Calu3 (cell line): ENCODE measurements at regions of chr1 and their contacts with region 1.

Region 1: GRCh38 chr1:58290685-58291372 is 255.7 kb downstream of the OMA1 start:
- DNase-seq: peak; percentile 16
- H3K4me3 Mint-ChIP-seq: no peak overlapping the region
- H3K27ac Mint-ChIP-seq: no peak overlapping the region
- H3K4me1 Mint-ChIP-seq: no peaks in the 10 kb centered on the region
- H3K27me3 Mint-ChIP-seq: no peaks in the 10 kb centered on the region
- CTCF ChIP-seq: no peak

Region 2: GRCh38 chr1:59879574-59879973 is 1588.7 kb after region 1 on chr1:
- CTCF ChIA-PET with region 1: no interaction called
- intact Hi-C with region 1: loop called (anchors 5 kb)
- DNase-seq: peak; percentile 80
- H3K4me3 Mint-ChIP-seq: no peak overlapping the region
- H3K27ac Mint-ChIP-seq: no peak overlapping the region
- H3K4me1 Mint-ChIP-seq: no peaks in the 10 kb centered on the region
- H3K27me3 Mint-ChIP-seq: no peaks in the 10 kb centered on the region
- CTCF ChIP-seq: peak; percentile 63